Left cardiac atrium (tissue), 4 donors: ENCODE measurements at regions of chr16 and their contacts with region 1.

Region 1: GRCh38 chr16:19179546-19180490 is 11.8 kb downstream of the SYT17 start:
- DNase-seq: peak; percentile 73
- ATAC-seq: peak; percentile 69 to 76

Region 2: GRCh38 chr16:18983565-18984424 is 196.0 kb before region 1 on chr16 and contains the start of gene TMC7:
- intact Hi-C with region 1: no loop called
- DNase-seq: peak; percentile 84
- ATAC-seq: peak; percentile 95 to 97
- total RNA-seq, gene TMC7: 0.85 to 1.2 TPM

Region 3: DNA sequence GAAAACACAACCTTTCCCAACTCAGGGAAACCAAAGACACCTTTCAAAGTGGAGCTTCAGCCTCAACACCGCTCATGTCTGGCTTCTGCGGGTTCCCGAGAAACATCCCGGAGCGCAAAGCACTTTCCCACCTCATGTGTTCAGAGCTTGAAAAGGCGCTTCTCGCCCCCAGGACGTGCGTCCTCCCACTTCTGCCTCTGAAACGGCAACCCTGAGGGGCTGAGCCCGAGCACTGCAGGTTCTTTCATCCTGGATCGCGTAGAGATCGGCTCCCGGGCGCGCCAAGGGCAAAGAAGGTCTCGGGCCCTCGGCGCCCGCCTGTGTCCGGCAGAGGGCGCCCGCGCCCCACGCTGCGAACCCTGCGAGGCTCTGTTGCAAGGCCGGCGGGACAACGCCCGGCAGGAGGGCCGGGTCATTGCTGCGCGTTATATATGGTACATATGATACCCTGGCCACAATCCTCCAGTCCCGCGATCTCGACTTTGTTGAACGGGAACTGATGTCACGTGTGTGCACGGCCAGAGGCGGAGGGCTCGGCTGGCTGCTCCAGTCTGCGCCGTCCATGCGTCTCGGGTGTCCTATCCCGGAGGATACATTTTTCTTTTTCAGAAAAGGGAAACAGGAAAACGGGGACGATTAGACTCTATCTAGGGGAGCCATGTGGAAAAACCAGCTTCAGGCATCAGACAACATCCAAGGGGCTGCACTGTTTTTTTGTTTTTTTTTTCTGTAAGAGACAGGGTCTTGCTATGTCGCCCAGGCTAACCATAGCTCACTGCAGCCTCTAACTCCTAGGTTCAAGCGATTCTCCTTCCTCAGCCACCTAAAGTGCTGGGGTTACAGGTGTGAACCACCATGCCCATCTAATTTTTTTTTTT is 93.3 kb before region 1 on chr16:
- intact Hi-C with region 1: loop called (anchors 5 to 10 kb)
- DNase-seq: peak; percentile 86
- ATAC-seq: peak; percentile 96 to 98

Region 4: DNA sequence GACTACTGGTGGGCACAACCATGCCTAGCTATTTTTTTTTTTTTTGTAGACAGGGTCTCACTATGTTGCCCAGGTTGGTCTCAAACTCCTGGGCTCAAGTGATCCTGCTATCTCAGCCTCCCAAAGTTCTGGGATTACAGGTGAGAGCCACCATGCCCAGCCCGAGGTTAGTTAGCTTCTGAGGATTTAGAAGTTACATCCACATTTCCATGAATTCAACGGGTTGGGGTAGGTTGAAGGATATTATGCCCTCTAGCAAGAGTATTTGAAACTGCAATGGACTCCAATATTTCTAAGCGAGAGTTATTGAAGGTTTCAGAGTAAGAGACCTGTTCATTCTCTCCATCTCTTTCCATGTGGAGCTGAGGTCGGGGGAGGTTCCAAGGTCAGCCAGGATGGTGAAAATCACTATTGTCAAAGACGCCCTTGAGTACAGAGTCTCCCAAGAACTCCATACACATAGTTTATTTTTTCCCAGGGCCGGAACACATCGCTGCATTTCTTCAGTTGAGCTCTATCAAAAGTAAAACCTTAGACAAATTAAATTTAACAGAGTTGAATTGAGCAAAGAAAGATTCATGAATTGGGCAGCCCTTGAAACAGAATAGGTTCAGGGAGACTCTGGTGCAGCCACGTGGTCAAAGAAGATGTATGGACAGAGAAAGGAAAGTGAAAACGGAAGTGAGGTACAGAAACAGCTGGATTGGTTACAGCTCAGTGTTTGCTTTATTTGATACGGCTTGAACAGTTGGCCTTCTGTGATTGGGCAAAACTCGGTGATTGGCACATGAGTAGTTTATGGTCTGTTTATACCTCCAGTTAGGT is 85.1 kb before region 1 on chr16:
- intact Hi-C with region 1: loop called (anchors 5 to 10 kb)
- DNase-seq: no peak
- ATAC-seq: no peak